ENCODE measurements at regions of chr10 and their contacts with region 1.

Region 1: GRCh38 chr10:104291439-104291951 is 22.5 kb downstream of the GSTO2 start:
- DNase-seq: peak; percentile 80 to 93 (median 89)
- ATAC-seq: peak; percentile 100
- H3K4me3 ChIP-seq: no peak overlapping the region
- H3K4me3 Mint-ChIP-seq: no peak overlapping the region
- H3K27ac ChIP-seq: no peak overlapping the region
- H3K27ac Mint-ChIP-seq: no peak overlapping the region
- H3K4me1 ChIP-seq: peaks cover 3% of the 10 kb centered on the region
- H3K4me1 Mint-ChIP-seq: peaks cover 5% of the 10 kb centered on the region
- H3K27me3 ChIP-seq: no peaks in the 10 kb centered on the region
- H3K27me3 Mint-ChIP-seq: peaks cover 20% of the 10 kb centered on the region
- CTCF ChIP-seq: peak; percentile 99

Region 2: GRCh38 chr10:104322416-104322782 is 30.9 kb after region 1 on chr10:
- CTCF ChIA-PET with region 1: interaction called, 25 read pairs
- POLR2A ChIA-PET with region 1: no interaction called
- intact Hi-C with region 1: no loop called
- DNase-seq: peak in 1 of 9 experiments; percentile 56
- ATAC-seq: peak; percentile 42
- H3K4me3 ChIP-seq: peak overlapping the region in 1 of 2 experiments; percentile 6
- H3K4me3 Mint-ChIP-seq: peak overlapping the region; percentile 75
- H3K27ac ChIP-seq: peak overlapping the region in 1 of 2 experiments; percentile 75
- H3K27ac Mint-ChIP-seq: peak overlapping the region; percentile 85
- H3K4me1 ChIP-seq: peaks cover 83% of the 10 kb centered on the region
- H3K4me1 Mint-ChIP-seq: peaks cover 91% of the 10 kb centered on the region
- H3K27me3 ChIP-seq: no peaks in the 10 kb centered on the region
- H3K27me3 Mint-ChIP-seq: no peaks in the 10 kb centered on the region
- CTCF ChIP-seq: no peak

Region 3: DNA sequence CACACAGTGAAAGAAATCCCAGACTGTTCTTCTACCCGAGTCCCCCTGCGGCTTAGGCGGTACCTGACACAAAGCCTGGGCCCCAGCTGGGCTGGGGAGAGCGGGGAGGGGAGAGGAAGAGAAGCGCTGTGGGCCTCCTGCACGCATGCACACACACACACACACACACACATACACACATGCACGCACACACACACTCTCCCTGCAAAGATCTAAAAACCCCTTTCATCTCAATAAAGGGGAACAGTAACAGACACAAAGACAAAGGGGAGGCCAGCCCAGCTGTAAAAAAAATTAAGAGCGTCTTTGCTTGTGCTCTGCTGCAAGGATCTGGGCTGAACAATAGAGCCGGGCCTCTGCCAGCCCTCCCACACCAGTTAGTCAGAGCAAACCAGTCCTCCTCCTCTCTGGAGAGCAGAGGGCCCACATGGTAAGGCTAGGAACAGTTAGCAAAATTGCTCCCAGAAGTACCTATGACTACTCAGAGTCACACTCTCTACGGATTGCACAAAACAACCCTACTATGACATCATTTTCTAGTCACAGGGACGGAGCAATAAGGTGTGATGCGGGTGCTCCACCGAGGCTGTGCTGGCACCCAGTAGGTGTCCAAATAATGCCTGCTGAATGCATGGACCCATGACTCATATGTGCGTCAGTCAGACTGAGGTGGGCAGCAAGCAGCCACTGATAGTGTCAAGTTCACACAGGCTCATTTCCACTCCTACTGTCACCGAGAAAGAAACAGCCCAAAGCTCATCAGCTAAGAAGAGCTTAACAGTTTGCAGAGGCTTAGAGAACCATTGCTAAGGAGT is 37.6 kb after region 1 on chr10:
- CTCF ChIA-PET with region 1: interaction called, 62 read pairs
- POLR2A ChIA-PET with region 1: interaction called, 3 read pairs
- intact Hi-C with region 1: no loop called
- DNase-seq: peak; percentile 51 to 96 (median 79)
- ATAC-seq: peak; percentile 71
- H3K4me3 ChIP-seq: peak overlapping the region; percentile 9 to 39
- H3K4me3 Mint-ChIP-seq: peak overlapping the region; percentile 78
- H3K27ac ChIP-seq: peak overlapping the region; percentile 67 to 79
- H3K27ac Mint-ChIP-seq: peak overlapping the region; percentile 97
- H3K4me1 ChIP-seq: peaks cover 95% of the 10 kb centered on the region
- H3K4me1 Mint-ChIP-seq: peaks cover 98% of the 10 kb centered on the region
- H3K27me3 ChIP-seq: no peaks in the 10 kb centered on the region
- H3K27me3 Mint-ChIP-seq: no peaks in the 10 kb centered on the region
- CTCF ChIP-seq: no peak

Region 4: DNA sequence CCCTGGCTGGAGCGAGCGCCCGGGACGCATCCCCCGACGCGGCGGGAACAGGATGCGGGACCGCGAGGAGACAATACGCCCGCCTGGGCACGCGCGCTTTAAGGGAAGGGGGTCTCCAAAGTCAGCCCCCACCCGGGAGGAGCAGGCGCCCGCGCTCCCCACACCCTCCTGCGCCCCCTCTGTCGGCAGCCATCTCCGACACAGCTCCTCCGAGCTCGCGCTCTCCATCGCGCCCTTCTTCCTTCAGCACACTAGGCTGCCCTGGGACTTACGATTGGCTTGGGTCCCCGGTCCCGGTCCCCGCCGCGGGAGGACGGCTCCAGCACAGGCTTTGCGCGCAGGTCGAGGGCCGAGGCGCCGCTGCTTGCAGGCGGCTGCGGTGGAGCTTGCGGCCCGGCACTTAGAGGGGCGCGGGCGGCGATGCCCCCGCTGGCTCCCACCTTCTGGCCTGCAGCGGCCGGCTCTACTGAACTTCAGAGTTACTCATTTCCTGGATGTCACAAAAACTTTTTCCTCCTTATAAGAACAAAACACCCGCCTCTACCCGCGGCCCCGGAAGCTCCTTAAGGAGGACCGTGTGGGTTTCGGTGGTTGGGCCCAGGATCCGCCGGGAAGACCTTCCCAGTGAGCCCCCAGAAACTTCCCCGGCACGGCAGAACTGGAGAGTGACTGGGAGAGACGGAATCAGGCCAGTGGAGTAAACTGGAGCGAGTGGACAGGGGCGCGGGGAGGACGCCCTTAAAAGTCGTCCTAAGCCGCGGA is 46.7 kb after region 1 on chr10 and contains the start of gene ITPRIP:
- CTCF ChIA-PET with region 1: interaction called, 62 read pairs
- POLR2A ChIA-PET with region 1: interaction called, 7 read pairs
- intact Hi-C with region 1: loop called in 1 of 2 experiments (anchors 1 kb)
- DNase-seq: peak; percentile 47 to 89 (median 76)
- ATAC-seq: peak; percentile 67
- H3K4me3 ChIP-seq: peak within 1 kb of the TSS; percentile 92 to 98
- H3K4me3 Mint-ChIP-seq: peak within 1 kb of the TSS; percentile 93
- H3K27ac ChIP-seq: peak within 1 kb of the TSS; percentile 92 to 93
- H3K27ac Mint-ChIP-seq: peak within 1 kb of the TSS; percentile 97
- H3K4me1 ChIP-seq: peaks cover 46% of the 10 kb centered on the region
- H3K4me1 Mint-ChIP-seq: peaks cover 54% of the 10 kb centered on the region
- H3K27me3 ChIP-seq: no peaks in the 10 kb centered on the region
- H3K27me3 Mint-ChIP-seq: no peaks in the 10 kb centered on the region
- CTCF ChIP-seq: no peak
- total RNA-seq, gene ITPRIP: 212 to 214 TPM

Measured in CD8-positive, alpha-beta T cell (primary cell).